Gastrocnemius medialis (tissue), 4 donors: ENCODE measurements at regions of chr1 and their contacts with region 1.

Region 1: GRCh38 chr1:30823969-30824735 is 66.6 kb upstream of the LAPTM5 start:
- DNase-seq: peak; percentile 85 to 93
- ATAC-seq: peak; percentile 94 to 97
- H3K4me3 ChIP-seq: peak overlapping the region; percentile 53 to 64 (median 56)
- H3K27ac ChIP-seq: peak overlapping the region; percentile 84 to 96 (median 92)
- H3K4me1 ChIP-seq: peaks cover 11 to 27% of the 10 kb centered on the region in 2 donors
- H3K27me3 ChIP-seq: no peaks in the 10 kb centered on the region
- CTCF ChIP-seq: no peak
- POLR2A ChIP-seq: peak; percentile 63 to 86

Region 2: DNA sequence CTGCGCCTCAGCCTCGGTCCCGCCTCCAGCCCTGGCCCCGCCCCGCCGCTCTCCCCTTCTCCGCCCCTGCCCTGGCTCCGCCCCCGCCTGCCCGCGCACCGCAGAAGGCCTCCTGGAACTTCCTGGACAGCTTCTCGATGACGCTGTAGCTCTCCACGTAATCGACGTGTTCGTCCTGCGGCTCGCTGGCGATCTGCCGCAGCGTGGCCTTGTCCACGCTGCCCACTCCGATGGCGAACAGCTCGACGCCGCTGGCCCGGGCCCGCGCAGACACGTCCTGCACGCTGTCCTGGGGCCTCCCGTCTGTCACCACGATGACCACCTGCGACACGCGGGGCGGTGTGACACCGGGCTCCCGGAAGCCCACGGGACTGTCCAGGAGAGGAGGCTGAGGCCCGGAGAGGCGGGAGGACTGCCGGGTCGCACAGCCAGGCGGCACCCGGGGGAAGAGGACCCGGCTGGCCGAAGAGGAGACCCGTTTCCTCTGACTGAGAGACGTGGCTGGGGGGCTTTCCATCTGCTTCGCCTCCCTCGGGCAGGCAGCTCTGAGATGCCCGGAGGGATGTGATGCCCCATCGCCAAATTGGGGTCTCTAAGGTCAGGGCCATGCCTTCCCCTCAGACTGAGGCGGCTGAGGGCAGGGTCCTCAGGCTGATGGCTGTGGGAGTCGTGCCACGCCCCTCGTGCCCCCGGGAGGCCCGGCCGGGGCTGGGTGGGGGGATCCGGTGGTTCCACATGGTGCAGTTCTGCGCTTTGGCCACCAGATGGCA is 105.3 kb before region 1 on chr1:
- in situ Hi-C with region 1: no loop called
- intact Hi-C with region 1: loop called (anchors 1 kb)
- DNase-seq: peak; percentile 71 to 94
- ATAC-seq: peak; percentile 79 to 81
- H3K4me3 ChIP-seq: peak overlapping the region; percentile 60 to 85 (median 73)
- H3K27ac ChIP-seq: peak overlapping the region; percentile 97 to 98 (median 98)
- H3K4me1 ChIP-seq: peaks cover 0 to 3% of the 10 kb centered on the region in 2 donors
- H3K27me3 ChIP-seq: no peaks in the 10 kb centered on the region
- CTCF ChIP-seq: peak; percentile 98 to 100 (median 99)
- POLR2A ChIP-seq: peak; percentile 80 to 85

Region 3: GRCh38 chr1:30801771-30802198 is 22.4 kb before region 1 on chr1:
- in situ Hi-C with region 1: no loop called
- intact Hi-C with region 1: no loop called
- DNase-seq: peak; percentile 42 to 55
- ATAC-seq: peak; percentile 66 to 78
- H3K4me3 ChIP-seq: peak overlapping the region in 1 of 4 donors; percentile 24
- H3K27ac ChIP-seq: no peak overlapping the region
- H3K4me1 ChIP-seq: peaks cover 3 to 26% of the 10 kb centered on the region in 2 donors
- H3K27me3 ChIP-seq: peaks cover 0 to 9% (median under 1%) of the 10 kb centered on the region in 3 donors
- CTCF ChIP-seq: peak; percentile 92 to 98 (median 95)
- POLR2A ChIP-seq: no peak

Region 4: DNA sequence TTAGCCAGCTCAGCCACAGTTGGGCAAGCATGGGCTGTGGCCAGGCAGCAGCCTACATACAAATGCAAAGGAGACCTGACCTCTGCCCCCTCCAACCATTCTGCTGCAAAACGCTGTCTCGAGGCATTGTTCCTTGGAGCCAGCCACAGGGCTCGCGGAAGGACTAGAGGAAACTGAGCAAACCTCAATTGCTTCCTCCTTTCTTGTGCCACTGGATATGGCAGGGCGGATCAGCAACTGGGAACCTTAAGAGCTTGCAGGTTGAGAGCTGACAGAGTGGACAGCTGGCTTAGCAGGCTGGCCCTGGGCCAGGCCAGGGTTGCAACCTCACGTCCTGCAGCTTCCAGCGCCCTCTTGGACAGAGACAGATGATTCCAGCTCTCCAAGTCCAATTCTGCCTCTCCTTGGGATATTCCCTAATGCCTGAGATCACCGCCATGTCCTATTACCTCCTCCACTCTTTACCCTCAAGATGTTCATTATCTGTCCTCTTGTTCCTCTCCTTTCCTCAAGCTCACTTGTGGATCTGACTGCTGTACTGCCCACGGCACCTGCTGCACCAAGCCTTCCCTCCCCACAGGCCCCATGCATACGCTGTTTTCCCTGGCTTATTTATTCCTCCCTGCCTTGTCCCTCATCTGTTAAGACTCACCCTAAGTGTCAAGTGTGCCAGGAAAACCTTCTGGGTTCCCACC is 16.9 kb after region 1 on chr1:
- in situ Hi-C with region 1: no loop called
- intact Hi-C with region 1: loop called (anchors 2 kb)
- DNase-seq: peak; percentile 32 to 58
- ATAC-seq: peak; percentile 65 to 81
- H3K4me3 ChIP-seq: no peak overlapping the region
- H3K27ac ChIP-seq: no peak overlapping the region
- H3K4me1 ChIP-seq: peaks cover 10 to 13% of the 10 kb centered on the region in 2 donors
- H3K27me3 ChIP-seq: peaks cover 0 to 2% (median 0%) of the 10 kb centered on the region in 3 donors
- CTCF ChIP-seq: no peak
- POLR2A ChIP-seq: no peak